ENCODE measurements at regions of chr11 and their contacts with region 1.

Region 1: GRCh38 chr11:14413307-14414069 is 54.5 kb upstream of the RRAS2 start:
- DNase-seq: peak; percentile 41
- H3K4me3 Mint-ChIP-seq: no peak overlapping the region
- H3K27ac Mint-ChIP-seq: peak overlapping the region; percentile 20
- H3K4me1 Mint-ChIP-seq: peaks cover 36% of the 10 kb centered on the region
- H3K27me3 Mint-ChIP-seq: no peaks in the 10 kb centered on the region

Region 2: GRCh38 chr11:13955971-13956421 is 457.5 kb before region 1 on chr11:
- CTCF ChIA-PET with region 1: no interaction called
- intact Hi-C with region 1: loop called (anchors 5 kb)
- DNase-seq: peak; percentile 71
- H3K4me3 Mint-ChIP-seq: no peak overlapping the region
- H3K27ac Mint-ChIP-seq: no peak overlapping the region
- H3K4me1 Mint-ChIP-seq: no peaks in the 10 kb centered on the region
- H3K27me3 Mint-ChIP-seq: peaks cover 5% of the 10 kb centered on the region

Region 3: GRCh38 chr11:14300661-14301304 is 112.7 kb before region 1 on chr11:
- CTCF ChIA-PET with region 1: interaction called, 15 read pairs
- intact Hi-C with region 1: no loop called
- DNase-seq: peak; percentile 69
- H3K4me3 Mint-ChIP-seq: no peak overlapping the region
- H3K27ac Mint-ChIP-seq: no peak overlapping the region
- H3K4me1 Mint-ChIP-seq: peaks cover 2% of the 10 kb centered on the region
- H3K27me3 Mint-ChIP-seq: no peaks in the 10 kb centered on the region

Region 4: GRCh38 chr11:14373931-14374646 is 39.4 kb before region 1 on chr11:
- CTCF ChIA-PET with region 1: interaction called, 6 read pairs
- intact Hi-C with region 1: loop called (anchors 1 kb)
- DNase-seq: no peak
- H3K4me3 Mint-ChIP-seq: no peak overlapping the region
- H3K27ac Mint-ChIP-seq: no peak overlapping the region
- H3K4me1 Mint-ChIP-seq: peaks cover 52% of the 10 kb centered on the region
- H3K27me3 Mint-ChIP-seq: peaks cover 7% of the 10 kb centered on the region

Region 5: GRCh38 chr11:14386895-14387480 is 26.5 kb before region 1 on chr11:
- CTCF ChIA-PET with region 1: no interaction called
- intact Hi-C with region 1: no loop called
- DNase-seq: no peak
- H3K4me3 Mint-ChIP-seq: no peak overlapping the region
- H3K27ac Mint-ChIP-seq: no peak overlapping the region
- H3K4me1 Mint-ChIP-seq: no peaks in the 10 kb centered on the region
- H3K27me3 Mint-ChIP-seq: peaks cover under 1% of the 10 kb centered on the region

Region 6: DNA sequence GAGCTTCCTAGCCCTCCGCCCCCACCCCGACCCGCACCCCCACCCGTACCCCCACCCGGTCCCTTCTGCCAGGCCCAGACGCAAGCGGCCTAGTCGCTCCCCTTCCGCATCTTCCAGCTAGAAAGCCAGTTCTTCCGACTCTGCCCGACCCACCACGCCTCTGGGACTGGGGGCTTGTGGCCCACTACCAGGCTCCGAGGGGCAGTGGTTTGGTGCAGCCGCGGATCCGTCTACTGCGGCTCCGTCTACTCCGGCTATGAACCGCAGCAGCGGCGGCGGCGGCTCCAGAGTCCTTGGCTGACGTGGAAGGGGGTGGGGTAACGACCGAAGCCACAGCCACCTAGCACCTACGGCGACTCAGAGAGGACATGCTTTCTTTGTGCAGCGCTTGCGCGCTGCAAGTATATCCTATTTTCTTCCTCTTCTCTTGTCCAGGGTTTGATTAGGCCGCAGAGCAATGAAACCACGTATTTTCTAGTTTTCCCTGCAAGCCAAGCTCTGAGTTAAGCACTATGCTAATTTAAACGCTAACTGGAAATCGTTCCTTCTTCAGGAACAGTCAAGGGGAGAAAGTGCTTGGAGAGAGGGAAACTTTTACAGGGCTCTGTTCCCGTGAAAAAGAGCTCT is 86.2 kb after region 1 on chr11 and contains the start of gene COPB1:
- CTCF ChIA-PET with region 1: no interaction called
- intact Hi-C with region 1: loop called (anchors 1 kb)
- DNase-seq: peak; percentile 97
- H3K4me3 Mint-ChIP-seq: peak within 1 kb of the TSS; percentile 99
- H3K27ac Mint-ChIP-seq: peak within 1 kb of the TSS; percentile 99
- H3K4me1 Mint-ChIP-seq: peaks cover 40% of the 10 kb centered on the region
- H3K27me3 Mint-ChIP-seq: no peaks in the 10 kb centered on the region
- total RNA-seq, gene COPB1: 111 to 112 TPM

Measured in activated naive CD4-positive, alpha-beta T cell treated with anti-CD3 and anti-CD28 coated beads for 36 hours (primary cell).